ENCODE measurements at regions of chr10 and their contacts with region 1.

Region 1: GRCh38 chr10:102645741-102646609 is 1.7 kb downstream of the TRIM8 start:
- DNase-seq: peak; percentile 75
- H3K4me3 Mint-ChIP-seq: peak overlapping the region; percentile 94
- H3K27ac Mint-ChIP-seq: peak overlapping the region; percentile 95
- H3K4me1 Mint-ChIP-seq: peaks cover 55% of the 10 kb centered on the region
- H3K27me3 Mint-ChIP-seq: no peaks in the 10 kb centered on the region

Region 2: GRCh38 chr10:102660888-102661657 is 15.1 kb after region 1 on chr10:
- CTCF ChIA-PET with region 1: interaction called, 28 read pairs
- POLR2A ChIA-PET with region 1: interaction called, 3 read pairs
- DNase-seq: peak; percentile 70
- H3K4me3 Mint-ChIP-seq: peak overlapping the region; percentile 47
- H3K27ac Mint-ChIP-seq: peak overlapping the region; percentile 92
- H3K4me1 Mint-ChIP-seq: peaks cover 45% of the 10 kb centered on the region
- H3K27me3 Mint-ChIP-seq: no peaks in the 10 kb centered on the region

Measured in activated CD4-positive, alpha-beta T cell treated with anti-CD3 and anti-CD28 coated beads, Interleukin-2, amount 10 ng/mL, durations not matched to agents 7 days and 5 days (primary cell).